ENCODE measurements at regions of chr2 and their contacts with region 1.

Region 1: DNA sequence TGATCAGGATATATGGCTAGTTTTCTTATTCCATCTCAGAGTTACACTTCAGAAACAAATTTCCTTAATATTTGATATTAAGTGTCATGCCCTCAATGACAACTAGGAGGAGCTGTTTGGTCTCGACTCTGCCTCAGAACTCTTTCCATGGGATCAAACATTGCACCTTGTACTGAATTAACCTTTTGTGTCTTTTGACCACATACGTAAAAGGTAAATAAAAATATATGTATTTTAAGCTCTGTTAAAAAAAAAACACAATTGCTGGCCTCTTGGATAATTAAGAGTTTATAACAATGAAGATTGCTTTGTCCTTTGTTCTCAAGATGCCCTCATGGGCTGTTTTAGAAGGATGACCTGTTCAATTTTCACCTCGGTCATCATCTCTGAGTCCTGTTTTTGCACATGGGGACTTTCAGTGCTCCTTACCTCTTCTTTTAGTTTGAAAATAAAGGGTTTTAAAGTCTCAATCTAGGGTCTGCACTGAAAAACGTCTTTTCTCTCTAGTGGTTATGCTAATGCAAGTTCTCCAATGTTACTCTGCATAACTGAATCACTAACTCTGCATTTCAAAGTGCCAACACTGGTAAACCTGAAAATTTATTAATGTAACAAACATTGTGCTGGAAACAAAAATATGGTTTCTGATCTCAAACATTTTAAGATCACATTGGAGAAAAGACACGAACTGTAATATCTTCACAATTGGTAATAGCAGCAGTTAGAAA is 18.8 kb upstream of the FN1 start:
- DNase-seq: peak; percentile 43
- H3K4me3 ChIP-seq: no peak overlapping the region
- H3K27ac ChIP-seq: no peak overlapping the region
- H3K4me1 ChIP-seq: peaks cover 6% of the 10 kb centered on the region
- H3K27me3 ChIP-seq: no peaks in the 10 kb centered on the region
- CTCF ChIP-seq: peak; percentile 84 to 87

Region 2: DNA sequence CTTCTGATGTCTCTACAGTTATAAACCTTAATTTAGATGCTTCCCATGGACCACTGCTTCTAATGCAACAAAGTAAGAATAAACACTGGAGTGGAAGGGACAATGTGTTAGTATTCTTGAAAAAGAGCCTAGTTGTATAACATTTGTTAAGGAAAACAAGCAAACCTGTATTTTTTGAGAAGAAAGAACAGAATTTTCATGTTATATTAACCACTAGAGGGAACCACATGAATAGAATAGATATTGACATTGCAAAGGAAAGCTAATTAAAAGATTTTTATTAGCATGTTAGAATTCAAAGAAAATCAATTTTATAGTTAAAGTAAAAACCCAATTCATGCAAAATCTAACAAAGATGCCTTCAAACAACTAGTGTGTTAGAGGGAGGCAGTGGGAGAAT is 494.0 kb before region 1 on chr2:
- CTCF ChIA-PET with region 1: no interaction called
- dilution Hi-C with region 1: no loop called
- in situ Hi-C with region 1: no loop called
- intact Hi-C with region 1: no loop called
- DNase-seq: peak; percentile 0
- H3K4me3 ChIP-seq: no peak overlapping the region
- H3K27ac ChIP-seq: no peak overlapping the region
- H3K4me1 ChIP-seq: no peaks in the 10 kb centered on the region
- H3K27me3 ChIP-seq: no peaks in the 10 kb centered on the region
- CTCF ChIP-seq: peak; percentile 26

Region 3: DNA sequence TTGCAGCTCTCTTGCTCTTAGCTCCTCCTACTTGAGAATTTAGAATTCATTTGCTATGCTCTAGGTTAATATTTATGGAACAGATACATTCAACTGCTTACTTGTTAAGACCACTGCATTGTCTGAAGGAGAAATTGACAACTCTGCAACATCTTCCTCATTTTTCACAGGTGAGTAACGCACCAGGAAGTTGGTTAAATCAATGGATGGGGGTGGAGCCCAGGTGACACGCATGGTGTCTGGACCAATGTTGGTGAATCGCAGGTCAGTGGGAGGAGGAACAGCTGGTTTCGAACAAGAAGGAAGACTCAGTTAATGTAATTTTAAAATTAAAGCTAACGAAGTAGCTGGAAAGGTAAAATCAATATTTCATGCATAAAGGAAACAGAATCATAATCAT is 63.2 kb before region 1 on chr2:
- CTCF ChIA-PET with region 1: no interaction called
- dilution Hi-C with region 1: no loop called
- in situ Hi-C with region 1: no loop called
- intact Hi-C with region 1: no loop called
- DNase-seq: no peak
- H3K4me3 ChIP-seq: no peak overlapping the region
- H3K27ac ChIP-seq: no peak overlapping the region
- H3K4me1 ChIP-seq: no peaks in the 10 kb centered on the region
- H3K27me3 ChIP-seq: no peaks in the 10 kb centered on the region
- CTCF ChIP-seq: no peak

Region 4: GRCh38 chr2:215635788-215636139 is 181.1 kb after region 1 on chr2:
- CTCF ChIA-PET with region 1: no interaction called
- dilution Hi-C with region 1: no loop called
- in situ Hi-C with region 1: no loop called
- intact Hi-C with region 1: loop called (anchors 1 kb)
- DNase-seq: peak; percentile 72
- H3K4me3 ChIP-seq: no peak overlapping the region
- H3K27ac ChIP-seq: no peak overlapping the region
- H3K4me1 ChIP-seq: peaks cover 8% of the 10 kb centered on the region
- H3K27me3 ChIP-seq: no peaks in the 10 kb centered on the region
- CTCF ChIP-seq: peak in 1 of 2 donors; percentile 35

Region 5: DNA sequence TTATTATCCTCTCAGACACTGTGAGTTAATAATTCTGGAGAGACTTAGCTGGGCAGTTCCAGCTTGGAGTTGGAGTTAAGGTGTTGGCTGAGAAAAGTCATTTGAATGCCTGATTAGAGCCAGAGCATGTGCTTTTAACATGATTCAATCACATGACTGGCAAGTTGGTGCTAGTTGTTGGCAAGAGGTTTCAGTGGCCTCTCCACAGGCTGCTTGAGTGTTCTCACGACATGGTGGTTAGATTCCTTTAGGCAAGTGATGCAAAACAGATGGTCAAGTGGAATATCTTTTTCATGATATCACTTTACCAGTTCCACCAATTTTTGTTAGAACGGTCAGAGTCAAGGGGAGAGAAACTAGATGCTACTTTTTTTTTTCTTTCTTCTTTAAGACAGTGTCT is 243.9 kb after region 1 on chr2:
- CTCF ChIA-PET with region 1: interaction called, 5 read pairs
- dilution Hi-C with region 1: no loop called
- in situ Hi-C with region 1: no loop called
- intact Hi-C with region 1: loop called (anchors 2 kb)
- DNase-seq: peak; percentile 99
- H3K4me3 ChIP-seq: no peak overlapping the region
- H3K27ac ChIP-seq: peak overlapping the region; percentile 83
- H3K4me1 ChIP-seq: peaks cover 36% of the 10 kb centered on the region
- H3K27me3 ChIP-seq: no peaks in the 10 kb centered on the region
- CTCF ChIP-seq: no peak

Region 6: GRCh38 chr2:215793747-215794595 is 339.3 kb after region 1 on chr2:
- CTCF ChIA-PET with region 1: no interaction called
- dilution Hi-C with region 1: no loop called
- in situ Hi-C with region 1: no loop called
- intact Hi-C with region 1: no loop called
- DNase-seq: peak; percentile 94
- H3K4me3 ChIP-seq: no peak overlapping the region
- H3K27ac ChIP-seq: peak overlapping the region; percentile 75
- H3K4me1 ChIP-seq: peaks cover 33% of the 10 kb centered on the region
- H3K27me3 ChIP-seq: no peaks in the 10 kb centered on the region
- CTCF ChIP-seq: no peak

Region 7: DNA sequence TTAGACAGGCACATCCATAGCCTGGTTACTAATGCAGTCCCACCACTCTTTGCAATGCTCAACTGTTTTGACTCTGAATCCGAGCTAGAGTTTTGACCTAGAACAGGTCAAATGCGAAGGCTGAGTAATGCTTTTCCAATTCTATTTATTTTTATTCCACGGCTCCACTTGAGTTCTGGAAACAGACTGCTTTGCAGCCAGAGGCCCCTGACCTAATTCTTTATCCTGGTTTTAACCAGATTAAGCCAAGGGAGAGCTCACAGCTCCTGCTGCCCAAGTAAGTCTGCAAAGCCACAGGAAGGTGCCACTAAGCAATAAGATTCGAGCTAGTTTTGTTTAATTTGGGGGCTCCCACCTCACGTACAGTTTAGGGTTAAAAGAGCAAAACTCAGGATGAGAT is 507.3 kb after region 1 on chr2:
- CTCF ChIA-PET with region 1: no interaction called
- dilution Hi-C with region 1: no loop called
- in situ Hi-C with region 1: no loop called
- intact Hi-C with region 1: no loop called
- DNase-seq: no peak
- H3K4me3 ChIP-seq: no peak overlapping the region
- H3K27ac ChIP-seq: no peak overlapping the region
- H3K4me1 ChIP-seq: no peaks in the 10 kb centered on the region
- H3K27me3 ChIP-seq: no peaks in the 10 kb centered on the region
- CTCF ChIP-seq: no peak

Measured in mammary epithelial cell (primary cell).